ENCODE measurements at regions of chr15 and their contacts with region 1.

Region 1: GRCh38 chr15:88989578-88989977 is 76.4 kb upstream of the MFGE8 start:
- DNase-seq: no peak
- ATAC-seq: no peak
- H3K4me3 ChIP-seq: no peak overlapping the region
- H3K27ac ChIP-seq: no peak overlapping the region
- H3K4me1 ChIP-seq: peaks cover 28 to 53% of the 10 kb centered on the region in 2 experiments
- H3K27me3 ChIP-seq: no peaks in the 10 kb centered on the region
- CTCF ChIP-seq: no peak
- EP300 ChIP-seq: no peak
- POLR2A ChIP-seq: no peak
- RAD21 ChIP-seq: no peak

Region 2: GRCh38 chr15:88913017-88913849 is 76.3 kb before region 1 on chr15 and contains the start of gene MFGE8:
- CTCF ChIA-PET with region 1: interaction called, 4 read pairs
- POLR2A ChIA-PET with region 1: no interaction called
- in situ Hi-C with region 1: no loop called
- intact Hi-C with region 1: loop called (anchors 5 kb)
- DNase-seq: peak; percentile 85 to 90 (median 87)
- ATAC-seq: peak; percentile 93
- H3K4me3 ChIP-seq: peak within 1 kb of the TSS; percentile 75
- H3K27ac ChIP-seq: peak within 1 kb of the TSS; percentile 74
- H3K4me1 ChIP-seq: peaks cover 33 to 38% of the 10 kb centered on the region in 2 experiments
- H3K27me3 ChIP-seq: no peaks in the 10 kb centered on the region
- CTCF ChIP-seq: peak in 2 of 3 experiments; percentile 15; a peak in 1 of 6 replicates
- EP300 ChIP-seq: no peak
- POLR2A ChIP-seq: peak; percentile 81
- RAD21 ChIP-seq: no peak
- polyA plus RNA-seq, gene MFGE8: 2.3 to 3.1 TPM

Region 3: GRCh38 chr15:88938802-88939485 is 50.6 kb before region 1 on chr15:
- CTCF ChIA-PET with region 1: no interaction called
- POLR2A ChIA-PET with region 1: no interaction called
- in situ Hi-C with region 1: no loop called
- intact Hi-C with region 1: loop called (anchors 5 kb)
- DNase-seq: peak; percentile 34 to 87 (median 50)
- ATAC-seq: peak; percentile 94
- H3K4me3 ChIP-seq: no peak overlapping the region
- H3K27ac ChIP-seq: peak overlapping the region; percentile 71
- H3K4me1 ChIP-seq: peaks cover 6 to 20% of the 10 kb centered on the region in 2 experiments; a peak in 4 of 5 replicates
- H3K27me3 ChIP-seq: no peaks in the 10 kb centered on the region
- CTCF ChIP-seq: peak; percentile 59 to 73 (median 70)
- EP300 ChIP-seq: peak; percentile 65
- POLR2A ChIP-seq: peak; percentile 66
- RAD21 ChIP-seq: peak; percentile 66 to 79

Region 4: GRCh38 chr15:89003865-89004725 is 14.5 kb after region 1 on chr15:
- CTCF ChIA-PET with region 1: no interaction called
- POLR2A ChIA-PET with region 1: interaction called, 6 read pairs
- in situ Hi-C with region 1: no loop called
- intact Hi-C with region 1: loop called (anchors 1 kb)
- DNase-seq: peak; percentile 60 to 80 (median 72)
- ATAC-seq: peak; percentile 96
- H3K4me3 ChIP-seq: no peak overlapping the region
- H3K27ac ChIP-seq: no peak overlapping the region
- H3K4me1 ChIP-seq: peaks cover 15 to 31% of the 10 kb centered on the region in 2 experiments
- H3K27me3 ChIP-seq: no peaks in the 10 kb centered on the region
- CTCF ChIP-seq: peak; percentile 75 to 85 (median 80)
- EP300 ChIP-seq: no peak
- POLR2A ChIP-seq: no peak
- RAD21 ChIP-seq: peak; percentile 82 to 95